ENCODE measurements at regions of chr6 and their contacts with region 1.

Region 1: GRCh38 chr6:29748391-29749307 is 25.4 kb downstream of the HLA-F start:
- ATAC-seq: peak; percentile 34 to 86 (median 78)
- H3K4me3 ChIP-seq: peak overlapping the region; percentile 16 to 54 (median 40)
- H3K27ac ChIP-seq: no peak overlapping the region
- H3K4me1 ChIP-seq: no peaks in the 10 kb centered on the region

Region 2: GRCh38 chr6:29502597-29502996 is 246.1 kb before region 1 on chr6:
- in situ Hi-C with region 1: no loop called
- ATAC-seq: no peak
- H3K4me3 ChIP-seq: no peak overlapping the region
- H3K27ac ChIP-seq: no peak overlapping the region
- H3K4me1 ChIP-seq: no peaks in the 10 kb centered on the region

Region 3: DNA sequence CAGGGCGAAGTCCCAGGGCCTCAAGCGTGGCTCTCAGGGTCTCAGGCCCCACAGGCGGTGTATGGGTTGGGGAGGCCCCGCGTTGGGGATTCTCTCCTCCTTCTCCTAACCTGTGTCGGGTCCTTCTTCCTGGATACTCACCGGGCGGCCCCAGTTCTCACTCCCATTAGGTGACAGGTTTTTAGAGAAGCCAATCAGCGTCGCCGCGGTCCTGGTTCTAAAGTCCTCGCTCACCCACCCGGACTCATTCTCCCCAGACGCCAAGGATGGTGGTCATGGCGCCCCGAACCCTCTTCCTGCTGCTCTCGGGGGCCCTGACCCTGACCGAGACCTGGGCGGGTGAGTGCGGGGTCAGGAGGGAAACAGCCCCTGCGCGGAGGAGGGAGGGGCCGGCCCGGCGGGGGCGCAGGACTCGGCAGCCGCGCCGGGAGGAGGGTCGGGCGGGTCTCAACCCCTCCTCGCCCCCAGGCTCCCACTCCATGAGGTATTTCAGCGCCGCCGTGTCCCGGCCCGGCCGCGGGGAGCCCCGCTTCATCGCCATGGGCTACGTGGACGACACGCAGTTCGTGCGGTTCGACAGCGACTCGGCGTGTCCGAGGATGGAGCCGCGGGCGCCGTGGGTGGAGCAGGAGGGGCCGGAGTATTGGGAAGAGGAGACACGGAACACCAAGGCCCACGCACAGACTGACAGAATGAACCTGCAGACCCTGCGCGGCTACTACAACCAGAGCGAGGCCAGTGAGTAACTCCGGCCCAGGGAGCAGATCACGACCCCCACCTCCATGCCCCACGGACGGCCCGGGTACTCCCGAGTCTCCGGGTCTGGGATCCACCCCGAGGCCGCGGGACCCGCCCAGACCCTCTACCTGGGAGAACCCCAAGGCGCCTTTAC is 79.2 kb after region 1 on chr6 and contains the start of gene HLA-G:
- in situ Hi-C with region 1: loop called in 2 of 9 experiments (anchors 10 to 25 kb)
- ATAC-seq: peak in 1 of 8 experiments; percentile 17
- H3K4me3 ChIP-seq: no peak within 1 kb of the TSS
- H3K27ac ChIP-seq: no peak within 1 kb of the TSS
- H3K4me1 ChIP-seq: no peaks in the 10 kb centered on the region
- total RNA-seq, gene HLA-G: 0.56 TPM in 1 of 8 experiments, not detected in the others

Region 4: GRCh38 chr6:30013291-30013922 is 264.8 kb after region 1 on chr6:
- in situ Hi-C with region 1: loop called in 1 of 9 experiments (anchors 25 kb)
- ATAC-seq: peak in 4 of 8 experiments; percentile 21 to 58 (median 34)
- H3K4me3 ChIP-seq: no peak overlapping the region
- H3K27ac ChIP-seq: no peak overlapping the region
- H3K4me1 ChIP-seq: no peaks in the 10 kb centered on the region